HepG2 (cell line): ENCODE measurements at regions of chr11 and their contacts with region 1.

Region 1: DNA sequence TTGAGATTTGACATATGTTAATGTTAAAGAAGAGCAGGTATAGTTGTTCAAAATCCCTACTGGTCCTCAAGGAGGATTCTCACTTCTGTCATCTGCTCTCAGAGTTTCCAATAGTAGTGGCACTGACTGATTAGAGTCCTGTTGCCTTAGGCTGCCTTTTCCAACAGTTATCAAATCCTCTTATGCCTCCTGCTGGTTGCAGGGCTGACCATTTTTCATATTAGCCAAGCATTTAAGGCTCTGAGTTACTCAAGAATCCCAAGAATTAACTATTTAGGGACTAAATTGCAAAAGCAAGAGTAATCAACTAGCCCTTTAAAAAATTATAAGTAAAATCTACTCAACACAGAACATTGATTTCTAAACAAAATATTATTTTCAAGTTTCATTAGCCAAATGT is 212.0 kb upstream of the CHORDC1 start:
- DNase-seq: peak; percentile 35
- ATAC-seq: peak; percentile 70
- H3K4me3 ChIP-seq: no peak overlapping the region
- H3K27ac ChIP-seq: no peak overlapping the region
- H3K4me1 ChIP-seq: no peaks in the 10 kb centered on the region
- H3K27me3 ChIP-seq: no peaks in the 10 kb centered on the region
- CTCF ChIP-seq: peak; percentile 50
- EP300 ChIP-seq: no peak
- POLR2A ChIP-seq: no peak
- RAD21 ChIP-seq: 0 out of 2 replicates have a peak, but pooled peaks have one; percentile 14

Region 2: DNA sequence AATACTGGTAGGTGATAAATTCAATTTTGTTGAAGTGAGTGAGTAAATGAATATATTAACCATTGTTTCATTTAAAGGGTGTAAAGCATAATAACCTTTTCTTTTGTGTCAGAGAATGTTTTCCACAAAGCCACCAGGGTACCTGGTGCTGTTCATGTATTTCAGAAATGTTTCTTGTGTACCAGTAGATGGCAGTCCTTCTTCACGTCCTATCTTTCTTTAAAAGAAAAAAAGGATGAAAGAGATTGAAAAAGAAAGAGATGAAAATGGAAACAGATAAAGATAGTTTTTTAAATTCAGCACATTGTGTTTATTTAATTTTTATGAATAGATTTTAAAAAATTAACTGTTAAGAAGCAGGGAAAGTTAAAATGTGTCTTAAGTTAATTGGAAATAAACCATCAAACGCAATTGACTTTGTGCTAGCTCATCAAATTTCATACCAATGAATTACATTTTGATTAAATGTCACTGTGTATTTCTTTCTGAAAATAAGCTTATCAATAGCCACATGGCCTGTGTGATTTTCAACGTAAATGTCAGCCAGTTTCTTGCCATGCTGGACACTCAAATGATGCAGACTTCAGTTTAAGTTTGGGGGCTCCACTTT is 146.5 kb before region 1 on chr11:
- CTCF ChIA-PET with region 1: interaction called, 14 read pairs
- POLR2A ChIA-PET with region 1: no interaction called
- in situ Hi-C with region 1: no loop called
- intact Hi-C with region 1: loop called (anchors 1 kb)
- DNase-seq: peak; percentile 33
- ATAC-seq: peak; percentile 71
- H3K4me3 ChIP-seq: no peak overlapping the region
- H3K27ac ChIP-seq: no peak overlapping the region
- H3K4me1 ChIP-seq: 0 out of 2 replicates have a peak, but pooled peaks cover 9% of the 10 kb centered on the region
- H3K27me3 ChIP-seq: no peaks in the 10 kb centered on the region
- CTCF ChIP-seq: peak; percentile 57
- EP300 ChIP-seq: no peak
- POLR2A ChIP-seq: no peak
- RAD21 ChIP-seq: peak; percentile 20; the same call in 1 of the 2 replicates

Region 3: DNA sequence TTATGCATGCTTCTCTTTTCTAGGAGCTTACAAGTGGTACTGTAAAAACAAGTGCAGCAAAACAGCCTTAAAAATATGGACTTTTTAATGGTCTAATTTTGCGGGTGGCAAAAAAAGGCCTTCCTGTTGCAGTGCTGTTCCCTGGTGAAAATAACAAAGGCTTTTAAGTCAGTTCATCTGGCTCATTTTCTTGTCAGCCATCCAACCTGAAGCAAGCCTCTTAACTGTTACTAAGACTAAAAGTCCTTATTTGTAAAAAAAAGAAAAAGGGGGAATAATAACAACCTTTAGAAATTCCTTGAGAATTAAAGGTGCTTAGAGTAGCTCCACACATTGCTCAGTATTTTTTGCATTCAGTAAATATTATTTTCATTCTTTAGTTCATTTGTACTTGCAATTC is 11.5 kb before region 1 on chr11:
- CTCF ChIA-PET with region 1: no interaction called
- POLR2A ChIA-PET with region 1: no interaction called
- in situ Hi-C with region 1: no loop called
- intact Hi-C with region 1: no loop called
- DNase-seq: no peak
- ATAC-seq: no peak
- H3K4me3 ChIP-seq: no peak overlapping the region
- H3K27ac ChIP-seq: no peak overlapping the region
- H3K4me1 ChIP-seq: no peaks in the 10 kb centered on the region
- H3K27me3 ChIP-seq: no peaks in the 10 kb centered on the region
- CTCF ChIP-seq: no peak
- EP300 ChIP-seq: no peak
- POLR2A ChIP-seq: no peak
- RAD21 ChIP-seq: no peak